ENCODE measurements at regions of chr13 and their contacts with region 1.

Region 1: GRCh38 chr13:110856942-110857835 is 57.7 kb downstream of the ANKRD10 start:
- DNase-seq: no peak
- ATAC-seq: no peak

Region 2: GRCh38 chr13:109734002-109734785 is 1123.0 kb before region 1 on chr13:
- intact Hi-C with region 1: loop called (anchors 5 kb)
- DNase-seq: no peak
- ATAC-seq: no peak

Region 3: GRCh38 chr13:111031531-111031961 is 174.4 kb after region 1 on chr13:
- intact Hi-C with region 1: no loop called
- DNase-seq: no peak
- ATAC-seq: no peak